OCI-LY7 (cell line): ENCODE measurements at regions of chr2 and their contacts with region 1.

Region 1: DNA sequence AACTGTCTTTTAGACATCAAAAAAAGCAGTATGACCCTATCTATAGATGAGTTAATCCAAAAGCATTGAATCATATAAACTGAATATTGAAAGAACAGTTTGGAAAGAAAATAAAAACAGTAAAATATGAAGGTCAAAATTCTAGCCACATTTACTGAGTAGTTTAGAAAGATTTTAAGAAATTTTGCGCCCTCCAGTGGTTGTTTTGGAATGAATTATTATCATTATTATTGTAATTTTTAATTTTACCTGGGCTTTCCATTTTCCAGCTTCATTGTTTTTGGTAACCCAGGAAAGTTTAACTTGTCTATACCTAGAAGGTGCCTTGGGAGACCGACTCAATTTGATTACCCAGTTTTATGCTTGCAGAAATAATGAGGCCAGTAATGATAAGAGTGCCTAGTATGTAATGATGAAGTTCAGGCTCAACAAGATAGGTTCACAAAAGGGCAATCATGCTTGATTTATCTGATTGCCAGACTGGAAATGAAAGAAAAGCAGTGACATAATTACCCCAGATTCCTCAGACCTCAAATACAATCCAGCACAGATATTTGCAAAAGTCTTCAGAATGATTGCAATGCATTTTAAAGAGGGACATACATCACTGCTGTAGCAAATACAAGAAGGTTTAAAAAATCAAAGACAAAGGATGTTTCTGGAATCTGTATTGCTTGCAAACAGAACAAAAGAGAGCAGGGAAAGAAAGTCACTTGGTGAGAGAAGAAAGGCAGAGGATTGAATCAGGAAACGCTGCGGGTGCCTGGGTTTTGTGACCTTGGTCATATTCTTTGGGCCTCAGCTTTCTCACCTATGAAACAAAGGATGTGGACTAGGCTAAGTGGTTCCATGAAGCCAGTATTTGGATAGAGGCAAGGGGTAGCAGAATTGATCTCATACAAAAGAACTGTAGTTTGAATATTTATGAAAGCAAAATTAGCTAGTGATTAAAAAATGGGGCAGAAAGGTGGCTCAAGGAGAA is 153.8 kb downstream of the MAP2 start:
- DNase-seq: peak; percentile 23
- H3K4me3 ChIP-seq: no peak overlapping the region
- H3K27ac ChIP-seq: no peak overlapping the region
- H3K4me1 ChIP-seq: no peaks in the 10 kb centered on the region
- CTCF ChIP-seq: peak; percentile 80

Region 2: DNA sequence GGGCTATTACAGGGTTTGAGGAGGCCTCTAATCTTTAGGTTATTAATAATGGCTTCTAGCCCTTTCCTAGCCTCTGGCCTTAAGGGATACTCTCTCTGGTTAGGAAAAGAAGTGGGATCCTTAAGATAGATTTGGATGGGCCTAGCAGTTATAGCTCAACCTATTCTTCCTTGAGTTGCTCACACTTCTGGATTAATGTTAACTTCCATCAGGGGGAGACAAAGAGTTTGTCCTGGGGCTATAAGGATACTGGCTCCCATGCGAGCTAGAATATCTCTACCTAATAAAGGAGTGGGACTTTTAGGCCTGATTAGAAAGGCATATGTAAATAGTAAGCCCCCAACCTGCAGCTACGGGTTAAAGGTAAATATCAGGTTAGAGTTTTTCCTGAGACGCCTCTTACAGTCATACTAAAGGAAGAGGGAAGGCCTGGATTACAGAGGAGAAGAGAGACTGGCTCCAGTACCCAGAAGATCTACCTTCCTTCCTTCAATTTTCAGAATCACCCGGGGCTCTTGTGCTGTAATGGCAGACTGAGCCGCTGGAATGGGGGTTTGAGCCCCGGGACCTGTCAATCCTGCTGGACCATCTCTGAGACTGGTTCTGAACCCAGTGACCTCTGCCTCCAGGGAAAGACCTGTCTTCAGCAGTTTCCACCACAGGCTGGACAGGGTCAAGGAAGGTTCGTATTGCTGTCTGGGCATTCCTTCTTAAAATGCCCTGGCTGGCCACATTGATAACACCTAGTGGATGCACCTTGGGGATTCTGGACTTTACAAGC is 1185.2 kb before region 1 on chr2:
- CTCF ChIA-PET with region 1: no interaction called
- POLR2A ChIA-PET with region 1: interaction called, 3 read pairs
- intact Hi-C with region 1: loop called (anchors 10 kb)
- DNase-seq: no peak
- H3K4me3 ChIP-seq: no peak overlapping the region
- H3K27ac ChIP-seq: no peak overlapping the region
- H3K4me1 ChIP-seq: no peaks in the 10 kb centered on the region
- CTCF ChIP-seq: 0 out of 2 replicates have a peak, but pooled peaks have one; percentile 34

Region 3: GRCh38 chr2:209334198-209335017 is 243.3 kb before region 1 on chr2:
- CTCF ChIA-PET with region 1: no interaction called
- POLR2A ChIA-PET with region 1: no interaction called
- intact Hi-C with region 1: loop called (anchors 2 kb)
- DNase-seq: peak; percentile 45
- H3K4me3 ChIP-seq: no peak overlapping the region
- H3K27ac ChIP-seq: no peak overlapping the region
- H3K4me1 ChIP-seq: no peaks in the 10 kb centered on the region
- CTCF ChIP-seq: peak; percentile 89

Region 4: DNA sequence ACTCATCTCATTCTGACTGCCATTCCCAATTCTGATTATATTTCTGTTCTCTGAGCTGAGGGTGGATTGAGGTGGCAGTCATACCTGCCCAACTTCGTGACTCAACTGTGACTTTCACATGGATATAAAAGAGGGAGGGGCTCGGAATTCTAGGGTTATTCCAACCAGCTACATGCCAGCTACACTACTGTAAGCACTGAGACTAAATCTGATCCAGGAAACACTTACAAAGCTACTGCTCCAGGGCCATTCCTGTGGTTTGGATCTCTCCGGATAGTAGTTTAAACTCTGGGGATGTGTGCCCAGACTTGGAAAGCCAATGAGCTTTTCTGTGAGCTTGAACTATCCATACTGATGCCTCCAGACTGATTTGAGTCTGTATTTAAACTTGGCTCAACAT is 146.0 kb before region 1 on chr2:
- CTCF ChIA-PET with region 1: no interaction called
- POLR2A ChIA-PET with region 1: no interaction called
- intact Hi-C with region 1: loop called (anchors 10 kb)
- DNase-seq: no peak
- H3K4me3 ChIP-seq: no peak overlapping the region
- H3K27ac ChIP-seq: no peak overlapping the region
- H3K4me1 ChIP-seq: no peaks in the 10 kb centered on the region
- CTCF ChIP-seq: no peak

Region 5: GRCh38 chr2:209549589-209549988 is 28.1 kb before region 1 on chr2:
- CTCF ChIA-PET with region 1: no interaction called
- POLR2A ChIA-PET with region 1: no interaction called
- intact Hi-C with region 1: no loop called
- DNase-seq: no peak
- H3K4me3 ChIP-seq: no peak overlapping the region
- H3K27ac ChIP-seq: no peak overlapping the region
- H3K4me1 ChIP-seq: no peaks in the 10 kb centered on the region
- CTCF ChIP-seq: no peak

Region 6: DNA sequence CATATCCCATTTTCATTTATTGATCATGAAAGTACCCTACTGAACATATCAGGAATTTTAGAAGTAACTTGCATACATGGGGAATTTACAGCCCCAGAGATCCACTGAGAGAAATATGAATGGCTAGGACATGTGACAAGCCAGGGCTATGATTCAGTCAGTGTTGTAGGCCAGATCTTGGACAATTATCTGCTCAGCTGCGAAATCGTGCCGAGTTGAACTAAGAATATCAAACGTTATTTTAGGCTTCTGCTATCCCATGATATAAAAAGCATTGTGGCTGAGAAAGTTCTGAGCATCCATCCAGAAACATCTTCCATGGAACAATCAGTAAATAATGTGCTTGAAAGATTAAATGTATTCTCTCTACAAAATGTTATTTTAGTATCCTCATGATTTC is 108.3 kb after region 1 on chr2:
- CTCF ChIA-PET with region 1: no interaction called
- POLR2A ChIA-PET with region 1: no interaction called
- intact Hi-C with region 1: no loop called
- DNase-seq: no peak
- H3K4me3 ChIP-seq: no peak overlapping the region
- H3K27ac ChIP-seq: no peak overlapping the region
- H3K4me1 ChIP-seq: no peaks in the 10 kb centered on the region
- CTCF ChIP-seq: no peak

Region 7: DNA sequence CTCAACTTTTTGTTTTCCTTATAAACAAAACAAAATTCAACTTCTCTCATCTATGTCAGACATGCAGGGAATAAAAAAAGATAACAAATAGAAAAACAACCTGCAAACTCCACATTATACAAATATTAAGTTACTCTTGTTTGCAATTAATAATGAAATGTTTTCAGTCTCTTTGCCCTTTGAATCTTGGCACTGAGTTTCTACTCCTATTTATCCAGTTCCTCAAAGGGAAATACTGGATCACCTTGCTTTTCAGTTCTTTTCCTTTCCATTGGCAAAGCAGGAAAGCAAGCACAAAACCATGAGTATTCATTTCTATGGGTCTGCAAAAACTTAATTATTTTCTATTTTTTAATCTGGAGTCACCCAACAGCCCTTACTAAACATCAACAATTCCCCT is 569.9 kb after region 1 on chr2:
- CTCF ChIA-PET with region 1: no interaction called
- POLR2A ChIA-PET with region 1: no interaction called
- intact Hi-C with region 1: no loop called
- DNase-seq: no peak
- H3K4me3 ChIP-seq: no peak overlapping the region
- H3K27ac ChIP-seq: no peak overlapping the region
- H3K4me1 ChIP-seq: no peaks in the 10 kb centered on the region
- CTCF ChIP-seq: no peak